B cell (primary cell): ENCODE measurements at regions of chr11 and their contacts with region 1.

Region 1: DNA sequence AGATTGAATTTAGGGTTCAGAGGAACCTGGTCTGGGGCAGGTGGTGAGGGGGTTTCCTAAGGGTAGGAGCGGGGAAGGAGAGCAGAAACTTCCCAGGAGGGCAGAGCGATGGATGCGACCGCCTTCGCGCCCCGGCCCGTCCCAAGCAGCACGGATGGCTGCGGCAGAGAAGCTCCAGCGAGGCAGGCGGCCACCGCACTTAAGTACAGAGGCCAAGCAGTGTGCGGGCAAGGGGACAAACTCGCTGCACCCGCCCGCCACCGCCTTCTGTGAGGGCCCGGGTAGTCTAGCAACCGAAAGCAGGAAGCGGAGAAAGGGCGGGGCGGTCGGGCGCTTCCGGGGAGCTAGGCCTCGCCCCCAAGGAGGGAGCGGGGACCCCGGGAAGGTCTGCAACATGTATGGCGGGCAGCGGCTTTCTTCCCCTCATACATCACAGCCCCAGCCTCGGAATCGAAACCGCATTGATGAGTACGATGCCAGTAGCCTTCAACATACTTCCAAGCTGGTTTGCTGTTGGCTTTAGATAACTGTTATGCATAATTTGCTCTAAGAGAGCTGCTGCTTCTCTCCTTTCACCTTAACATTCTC is at the start of gene AGBL2:
- DNase-seq: peak; percentile 88
- ATAC-seq: peak; percentile 99
- H3K4me3 ChIP-seq: peak within 1 kb of the TSS; percentile 81 to 95 (median 94)
- H3K4me3 Mint-ChIP-seq: peak within 1 kb of the TSS; percentile 97
- H3K27ac ChIP-seq: peak within 1 kb of the TSS; percentile 84 to 97
- H3K27ac Mint-ChIP-seq: peak within 1 kb of the TSS; percentile 97
- H3K4me1 ChIP-seq: peaks cover 11 to 15% of the 10 kb centered on the region in 2 donors
- H3K4me1 Mint-ChIP-seq: peaks cover 14% of the 10 kb centered on the region
- H3K27me3 ChIP-seq: no peaks in the 10 kb centered on the region
- H3K27me3 Mint-ChIP-seq: no peaks in the 10 kb centered on the region
- CTCF ChIP-seq: no peak
- total RNA-seq, gene AGBL2: 13.6 and 17.0 TPM in 2 replicates

Region 2: GRCh38 chr11:47642099-47642855 is 72.9 kb before region 1 on chr11 and contains the start of gene MTCH2:
- CTCF ChIA-PET with region 1: interaction called, 4 read pairs
- POLR2A ChIA-PET with region 1: interaction called, 4 read pairs
- intact Hi-C with region 1: loop called (anchors 1 kb)
- DNase-seq: peak; percentile 99
- ATAC-seq: peak; percentile 94
- H3K4me3 ChIP-seq: peak within 1 kb of the TSS; percentile 79 to 86 (median 79)
- H3K4me3 Mint-ChIP-seq: peak within 1 kb of the TSS; percentile 93
- H3K27ac ChIP-seq: peak within 1 kb of the TSS; percentile 92
- H3K27ac Mint-ChIP-seq: peak within 1 kb of the TSS; percentile 96
- H3K4me1 ChIP-seq: peaks cover 13 to 21% of the 10 kb centered on the region in 2 donors
- H3K4me1 Mint-ChIP-seq: peaks cover 23% of the 10 kb centered on the region
- H3K27me3 ChIP-seq: no peaks in the 10 kb centered on the region
- H3K27me3 Mint-ChIP-seq: no peaks in the 10 kb centered on the region
- CTCF ChIP-seq: peak; percentile 29
- total RNA-seq, gene MTCH2: 26.9 and 30.9 TPM in 2 replicates